AG04449 (cell line): ENCODE measurements at regions of chr2 and their contacts with region 1.

Region 1: GRCh38 chr2:118865106-118865505 is 17.7 kb upstream of the EN1 start:
- DNase-seq: no peak
- H3K4me3 ChIP-seq: no peak overlapping the region
- CTCF ChIP-seq: peak; percentile 71

Region 2: GRCh38 chr2:118216224-118216623 is 648.9 kb before region 1 on chr2:
- CTCF ChIA-PET with region 1: interaction called, 116 read pairs
- POLR2A ChIA-PET with region 1: no interaction called
- DNase-seq: no peak
- H3K4me3 ChIP-seq: no peak overlapping the region
- CTCF ChIP-seq: no peak

Region 3: DNA sequence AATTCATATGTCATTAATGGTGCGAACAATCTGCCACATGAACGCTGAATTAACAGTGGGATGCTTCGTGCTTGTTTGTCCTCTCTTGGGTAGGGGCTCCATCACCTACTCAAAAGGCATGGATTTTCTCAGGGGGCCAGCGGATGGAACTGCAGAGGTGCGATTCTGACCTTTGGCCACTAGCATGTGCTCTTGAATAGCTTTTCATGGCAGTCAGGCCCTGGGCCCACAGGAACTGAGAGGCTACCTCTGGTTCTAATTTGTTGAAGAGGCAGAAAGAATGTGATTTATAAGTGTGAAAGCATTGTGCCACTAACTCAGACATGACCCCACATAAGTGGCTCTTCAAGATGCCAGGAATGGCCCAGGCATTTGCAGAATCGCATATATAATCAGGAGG is 493.6 kb before region 1 on chr2:
- CTCF ChIA-PET with region 1: interaction called, 32 read pairs
- POLR2A ChIA-PET with region 1: no interaction called
- DNase-seq: no peak
- H3K4me3 ChIP-seq: no peak overlapping the region
- CTCF ChIP-seq: peak; percentile 89